ENCODE measurements at regions of chr4 and their contacts with region 1.

Region 1: DNA sequence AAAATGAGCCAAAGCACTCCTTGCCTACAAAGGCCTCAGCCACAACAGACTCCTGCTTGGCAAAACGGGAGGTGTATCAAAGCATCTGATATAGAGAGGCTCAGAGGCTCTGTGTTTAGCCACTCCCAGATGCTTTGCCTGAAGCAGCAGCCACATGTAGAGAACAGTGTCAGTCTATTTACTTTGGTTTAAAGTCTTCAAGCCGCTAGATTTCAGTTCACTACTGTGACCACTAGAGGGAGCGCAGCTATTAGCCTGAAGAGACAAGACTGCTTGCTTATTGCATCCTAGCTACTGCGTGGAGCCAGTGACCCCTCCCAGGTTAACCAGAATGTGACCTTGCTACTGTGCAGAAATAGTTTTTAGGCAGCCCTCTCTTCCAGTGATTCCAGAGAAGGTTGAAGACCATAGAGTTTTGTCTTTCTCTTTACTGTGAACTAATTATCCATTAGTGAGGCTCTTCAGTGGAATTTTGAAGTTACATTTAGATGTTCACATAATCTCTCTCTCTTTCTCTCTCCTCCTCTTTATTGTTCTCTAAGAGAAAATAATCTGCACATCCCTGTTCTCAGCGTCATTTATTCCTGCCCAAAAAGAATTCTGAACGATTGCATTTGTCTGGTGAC is 39.3 kb downstream of the BMP3 start:
- DNase-seq: peak; percentile 90
- ATAC-seq: peak; percentile 98
- H3K4me3 ChIP-seq: no peak overlapping the region
- H3K27ac ChIP-seq: no peak overlapping the region
- H3K4me1 ChIP-seq: no peaks in the 10 kb centered on the region
- H3K27me3 ChIP-seq: no peaks in the 10 kb centered on the region
- CTCF ChIP-seq: peak; percentile 82

Region 2: DNA sequence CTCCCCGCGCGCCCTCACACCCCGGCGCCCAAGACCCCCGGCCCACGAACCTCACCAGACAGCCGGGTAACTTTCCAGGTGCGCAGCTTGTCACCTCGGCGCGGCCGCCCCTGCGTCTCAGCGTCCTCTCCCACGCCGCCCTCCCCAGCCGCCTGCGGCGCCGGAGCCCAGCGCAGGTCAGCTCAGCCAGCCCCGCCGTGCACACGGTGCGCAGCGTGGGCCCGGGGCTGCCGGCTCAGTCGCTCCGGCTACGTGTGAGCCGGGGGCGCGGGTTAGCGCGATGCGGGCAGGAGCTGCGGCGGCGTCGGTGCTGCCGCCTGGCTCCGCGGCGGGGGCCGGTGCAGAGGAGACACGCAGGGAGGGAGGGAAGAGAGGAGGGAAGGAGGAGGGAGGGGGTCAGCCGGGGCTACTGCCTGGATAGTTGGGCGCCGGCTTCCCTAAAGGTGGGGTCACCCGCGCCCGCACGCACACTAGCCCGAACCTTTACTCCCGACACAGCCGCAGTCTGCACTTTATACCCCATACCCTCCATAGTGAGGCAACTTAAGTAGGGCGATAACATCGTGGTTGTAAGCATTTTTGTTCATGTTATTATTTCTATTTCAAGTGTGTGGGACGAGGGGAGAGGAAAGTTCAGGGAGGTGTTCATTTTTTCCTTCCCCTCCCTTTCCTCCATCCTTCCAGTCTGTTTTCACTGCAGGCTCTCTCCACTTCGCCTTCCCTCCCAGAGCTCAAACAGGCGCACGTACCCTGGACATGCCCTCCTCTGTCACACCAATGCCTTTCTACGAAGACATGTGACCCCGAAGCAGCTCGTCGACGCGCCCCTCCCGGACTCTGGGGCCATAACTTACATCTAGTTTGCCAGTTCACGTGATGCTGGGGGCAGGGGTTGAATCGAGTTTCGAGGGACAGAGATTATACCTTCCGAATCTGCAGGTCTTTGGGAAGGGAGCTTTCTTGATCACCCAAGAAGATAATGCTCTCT is 145.4 kb after region 1 on chr4 and contains the start of gene PRKG2:
- CTCF ChIA-PET with region 1: no interaction called
- POLR2A ChIA-PET with region 1: no interaction called
- intact Hi-C with region 1: loop called (anchors 2 kb)
- DNase-seq: no peak
- ATAC-seq: peak; percentile 67
- H3K4me3 ChIP-seq: peak within 1 kb of the TSS; percentile 62
- H3K27ac ChIP-seq: no peak within 1 kb of the TSS
- H3K4me1 ChIP-seq: no peaks in the 10 kb centered on the region
- H3K27me3 ChIP-seq: peaks cover 32% of the 10 kb centered on the region
- CTCF ChIP-seq: no peak
- total RNA-seq, gene PRKG2: 0.40 and 0.55 TPM in 2 replicates

Region 3: DNA sequence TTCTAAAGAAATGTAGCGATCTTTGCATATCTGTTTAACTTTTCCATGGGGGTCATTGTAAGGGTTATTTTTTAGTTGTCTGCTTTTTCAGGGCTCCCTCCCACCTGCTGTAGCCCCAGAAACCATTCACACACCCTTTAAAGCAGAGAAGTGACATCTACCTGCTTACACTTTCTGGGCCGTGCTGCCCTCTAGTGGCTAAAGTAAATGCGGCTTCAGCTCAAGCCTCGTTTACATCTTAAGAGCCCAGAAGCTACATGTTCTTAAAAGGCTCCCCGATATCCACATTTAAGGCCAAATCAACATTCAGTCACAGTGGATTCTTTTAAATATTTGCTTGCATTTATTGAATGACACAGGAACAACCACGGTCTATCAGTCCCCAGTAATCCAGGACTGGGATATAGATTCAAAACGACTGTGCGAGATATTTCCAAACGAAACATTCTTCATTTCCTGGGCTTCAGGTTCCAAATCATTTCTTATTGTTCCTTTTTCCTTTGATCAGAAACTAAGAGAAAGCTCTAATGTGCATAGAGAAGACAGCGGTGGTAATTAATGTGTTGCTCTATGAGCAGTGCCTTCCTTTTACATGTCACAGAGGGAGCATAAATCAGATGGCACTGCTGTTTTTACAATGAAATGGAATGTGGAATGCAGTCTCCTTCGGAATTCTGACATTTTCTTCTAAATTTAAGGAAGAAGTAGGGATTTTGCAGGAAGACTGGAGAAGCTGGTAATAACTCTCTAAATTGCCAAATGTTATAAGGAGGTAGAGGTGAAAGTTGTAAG is 282.0 kb after region 1 on chr4:
- CTCF ChIA-PET with region 1: interaction called, 6 read pairs
- POLR2A ChIA-PET with region 1: no interaction called
- intact Hi-C with region 1: loop called (anchors 1 kb)
- DNase-seq: peak; percentile 75
- ATAC-seq: peak; percentile 83
- H3K4me3 ChIP-seq: no peak overlapping the region
- H3K27ac ChIP-seq: no peak overlapping the region
- H3K4me1 ChIP-seq: no peaks in the 10 kb centered on the region
- H3K27me3 ChIP-seq: no peaks in the 10 kb centered on the region
- CTCF ChIP-seq: peak; percentile 90

Region 4: GRCh38 chr4:81369886-81370285 is 300.1 kb after region 1 on chr4:
- CTCF ChIA-PET with region 1: interaction called, 4 read pairs
- POLR2A ChIA-PET with region 1: no interaction called
- intact Hi-C with region 1: loop called (anchors 5 kb)
- DNase-seq: peak; percentile 5
- ATAC-seq: 0 out of 2 replicates have a peak, but pooled peaks have one; percentile 29
- H3K4me3 ChIP-seq: no peak overlapping the region
- H3K27ac ChIP-seq: no peak overlapping the region
- H3K4me1 ChIP-seq: no peaks in the 10 kb centered on the region
- H3K27me3 ChIP-seq: no peaks in the 10 kb centered on the region
- CTCF ChIP-seq: peak; percentile 24; the same call in 1 of the 2 replicates